ENCODE measurements at regions of chr5 and their contacts with region 1.

Region 1: GRCh38 chr5:87899721-87900131 is 368.9 kb downstream of the TMEM161B start:
- DNase-seq: peak in 8 of 10 donors; percentile 41 to 87 (median 66)
- H3K4me3 ChIP-seq: peak overlapping the region in 16 of 59 donors; percentile 2 to 38 (median 18)
- H3K27ac ChIP-seq: peak overlapping the region; percentile 59 to 94 (median 89)
- H3K27me3 ChIP-seq: no peaks in the 10 kb centered on the region
- CTCF ChIP-seq: peak in 4 of 56 donors; percentile 6 to 24 (median 12)

Region 2: GRCh38 chr5:87780831-87781760 is 118.6 kb before region 1 on chr5:
- intact Hi-C with region 1: loop called (anchors 5 to 10 kb)
- DNase-seq: peak; percentile 59 to 93 (median 88)
- H3K4me3 ChIP-seq: peak overlapping the region in 50 of 59 donors; percentile 1 to 47 (median 25)
- H3K27ac ChIP-seq: peak overlapping the region in 58 of 59 donors; percentile 25 to 94 (median 82)
- H3K27me3 ChIP-seq: no peaks in the 10 kb centered on the region
- CTCF ChIP-seq: peak; percentile 85 to 99 (median 96)

Region 3: GRCh38 chr5:87944553-87945285 is 45.0 kb after region 1 on chr5:
- intact Hi-C with region 1: loop called in 1 of 2 experiments (anchors 5 kb)
- DNase-seq: peak; percentile 73 to 96 (median 90)
- H3K4me3 ChIP-seq: peak overlapping the region in 4 of 59 donors; percentile 4 to 17 (median 7)
- H3K27ac ChIP-seq: peak overlapping the region in 55 of 59 donors; percentile 7 to 86 (median 68)
- H3K27me3 ChIP-seq: no peaks in the 10 kb centered on the region
- CTCF ChIP-seq: peak in 14 of 56 donors; percentile 4 to 36 (median 18)

Region 4: GRCh38 chr5:87949676-87950631 is 50.2 kb after region 1 on chr5:
- intact Hi-C with region 1: loop called (anchors 2 kb)
- DNase-seq: peak in 7 of 10 donors; percentile 30 to 74 (median 54)
- H3K4me3 ChIP-seq: peak overlapping the region in 20 of 59 donors; percentile 1 to 52 (median 19)
- H3K27ac ChIP-seq: peak overlapping the region; percentile 28 to 93 (median 86)
- H3K27me3 ChIP-seq: no peaks in the 10 kb centered on the region
- CTCF ChIP-seq: peak in 7 of 56 donors; percentile 6 to 20 (median 13)

Region 5: DNA sequence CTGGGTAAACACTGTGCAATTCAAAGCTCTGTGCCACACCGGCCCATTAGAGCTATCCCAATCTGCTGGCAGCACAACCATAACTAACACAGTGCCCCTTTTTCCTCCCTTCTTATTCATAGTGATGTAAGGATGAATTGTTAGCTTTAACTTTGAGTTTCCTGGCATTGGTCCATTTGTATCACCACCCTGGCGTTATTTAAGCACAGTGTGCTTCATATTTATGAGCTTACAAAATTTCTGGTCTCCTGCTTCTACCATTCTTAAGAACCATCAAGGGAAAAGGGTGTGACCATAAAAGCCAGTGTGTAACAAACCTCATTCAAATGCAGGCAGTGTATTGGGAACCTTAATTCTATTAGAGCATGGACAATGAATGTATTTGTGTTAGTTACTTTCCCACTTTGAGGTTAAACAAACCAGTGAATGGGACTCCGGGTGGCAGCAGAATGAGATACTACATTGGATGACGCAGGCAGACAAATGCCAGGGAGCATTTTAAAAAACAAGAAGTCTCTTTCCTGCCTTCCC is 146.3 kb after region 1 on chr5:
- intact Hi-C with region 1: loop called in 1 of 2 experiments (anchors 2 kb)
- DNase-seq: peak in 3 of 10 donors; percentile 9 to 50 (median 32)
- H3K4me3 ChIP-seq: peak overlapping the region in 2 of 59 donors; percentile 5 to 9
- H3K27ac ChIP-seq: peak overlapping the region in 55 of 59 donors; percentile 6 to 87 (median 74)
- H3K27me3 ChIP-seq: no peaks in the 10 kb centered on the region
- CTCF ChIP-seq: no peak

Region 6: GRCh38 chr5:88190139-88190834 is 290.6 kb after region 1 on chr5:
- intact Hi-C with region 1: loop called in 1 of 2 experiments (anchors 2 kb)
- DNase-seq: peak in 5 of 10 donors; percentile 14 to 43 (median 32)
- H3K4me3 ChIP-seq: peak overlapping the region in 55 of 59 donors; percentile 5 to 58 (median 38)
- H3K27ac ChIP-seq: peak overlapping the region in 26 of 59 donors; percentile 5 to 77 (median 37)
- H3K27me3 ChIP-seq: no peaks in the 10 kb centered on the region
- CTCF ChIP-seq: peak in 55 of 56 donors; percentile 43 to 85 (median 66)

Region 7: DNA sequence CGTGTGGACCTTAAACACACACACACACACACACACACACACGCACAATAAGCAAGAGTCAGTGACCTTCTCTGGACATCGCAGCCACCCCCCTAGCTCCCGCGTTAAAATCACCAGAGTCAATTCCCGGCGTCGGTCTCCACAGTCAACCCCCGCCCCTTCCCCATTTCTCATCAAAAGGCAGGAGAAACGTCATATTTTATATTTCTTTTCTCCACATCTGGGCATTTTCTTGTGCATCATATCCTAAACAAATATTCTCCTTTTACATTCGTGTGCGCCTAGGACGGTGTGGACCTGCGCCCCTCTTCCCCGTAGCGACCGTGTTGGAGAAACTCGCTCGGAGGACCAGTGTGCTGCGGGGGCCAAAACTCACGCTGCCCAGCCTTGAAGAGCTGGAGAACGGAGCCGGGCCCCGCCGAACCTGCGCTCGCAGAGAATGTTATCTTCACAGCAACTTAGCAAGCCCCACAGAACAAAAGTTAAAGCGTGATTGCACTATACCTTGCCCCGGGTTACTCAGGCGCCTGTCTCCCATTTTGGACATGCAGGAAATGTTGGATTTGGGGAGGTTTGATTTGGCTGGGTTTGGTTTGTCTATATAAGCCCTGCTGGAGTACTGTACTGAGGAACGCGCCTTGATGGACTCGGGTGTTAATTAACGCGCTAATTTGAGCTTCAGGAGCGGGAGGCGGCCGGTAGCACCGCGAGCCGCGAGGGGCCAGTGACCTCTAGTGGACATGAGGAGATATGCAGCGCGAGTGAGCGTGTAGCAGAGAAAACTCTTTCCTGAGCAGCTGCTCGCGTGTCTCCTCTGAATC is 790.9 kb after region 1 on chr5:
- intact Hi-C with region 1: loop called in 1 of 2 experiments (anchors 5 kb)
- DNase-seq: peak; percentile 77 to 95 (median 90)
- H3K4me3 ChIP-seq: peak overlapping the region; percentile 46 to 93 (median 70)
- H3K27ac ChIP-seq: peak overlapping the region; percentile 61 to 100 (median 99)
- H3K27me3 ChIP-seq: peaks cover 0 to 13% (median 0%) of the 10 kb centered on the region in 45 donors
- CTCF ChIP-seq: peak; percentile 85 to 99 (median 96)

Measured in dorsolateral prefrontal cortex (tissue), 120 donors.